ENCODE measurements at regions of chr14 and their contacts with region 1.

Region 1: DNA sequence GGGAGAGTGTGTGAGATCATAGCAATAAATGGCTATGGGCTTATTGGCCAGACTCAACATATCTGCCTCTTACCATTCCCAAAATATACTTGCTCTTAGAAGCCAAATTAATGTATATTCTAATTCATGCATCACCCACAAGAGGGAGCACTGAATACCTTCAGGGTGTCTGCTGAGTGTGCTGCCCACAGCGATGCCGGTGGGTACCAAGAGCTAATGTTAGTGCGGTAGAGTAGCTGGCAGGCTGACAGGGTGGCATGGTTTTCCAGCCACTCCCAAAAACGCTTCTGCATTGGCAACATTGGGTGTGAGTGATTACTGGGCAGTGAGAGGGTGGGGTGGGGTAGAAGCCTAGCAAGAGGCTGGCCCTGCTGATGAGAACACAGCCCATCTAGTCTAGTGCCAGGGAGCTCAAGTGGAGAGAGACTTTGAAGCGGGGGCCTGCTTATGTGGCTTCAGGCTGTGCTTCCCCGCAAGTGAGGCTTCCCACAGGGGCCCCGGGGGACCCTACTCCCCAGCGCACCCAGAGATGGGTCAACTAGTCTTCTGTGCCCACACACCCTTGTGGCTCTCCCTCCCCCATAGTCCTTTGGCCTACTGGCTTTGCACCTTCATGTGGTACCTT is 9.2 kb upstream of the PLEKHD1 start:
- DNase-seq: no peak
- H3K4me3 ChIP-seq: no peak overlapping the region
- H3K27ac ChIP-seq: no peak overlapping the region
- H3K4me1 ChIP-seq: no peaks in the 10 kb centered on the region
- H3K27me3 ChIP-seq: no peaks in the 10 kb centered on the region
- CTCF ChIP-seq: peak; percentile 40 to 57 (median 45); a peak in 3 of 4 replicates
- EP300 ChIP-seq: no peak
- POLR2A ChIP-seq: no peak
- RAD21 ChIP-seq: peak; percentile 35 to 45

Region 2: GRCh38 chr14:69423279-69423678 is 52.0 kb before region 1 on chr14:
- CTCF ChIA-PET with region 1: no interaction called
- POLR2A ChIA-PET with region 1: no interaction called
- DNase-seq: no peak
- H3K4me3 ChIP-seq: no peak overlapping the region
- H3K27ac ChIP-seq: no peak overlapping the region
- H3K4me1 ChIP-seq: no peaks in the 10 kb centered on the region
- H3K27me3 ChIP-seq: no peaks in the 10 kb centered on the region
- CTCF ChIP-seq: no peak
- EP300 ChIP-seq: no peak
- POLR2A ChIP-seq: no peak
- RAD21 ChIP-seq: no peak

Region 3: GRCh38 chr14:69460093-69460701 is 15.1 kb before region 1 on chr14:
- CTCF ChIA-PET with region 1: interaction called, 24 read pairs
- POLR2A ChIA-PET with region 1: no interaction called
- DNase-seq: no peak
- H3K4me3 ChIP-seq: no peak overlapping the region
- H3K27ac ChIP-seq: no peak overlapping the region
- H3K4me1 ChIP-seq: no peaks in the 10 kb centered on the region
- H3K27me3 ChIP-seq: no peaks in the 10 kb centered on the region
- CTCF ChIP-seq: peak in 2 of 3 experiments; percentile 60 to 80; a peak in 3 of 4 replicates
- EP300 ChIP-seq: no peak
- POLR2A ChIP-seq: no peak
- RAD21 ChIP-seq: peak; percentile 70 to 75

Region 4: GRCh38 chr14:69485701-69486100 is 10.4 kb after region 1 on chr14:
- CTCF ChIA-PET with region 1: interaction called, 10 read pairs
- POLR2A ChIA-PET with region 1: interaction called, 3 read pairs
- DNase-seq: no peak
- H3K4me3 ChIP-seq: no peak overlapping the region
- H3K27ac ChIP-seq: no peak overlapping the region
- H3K4me1 ChIP-seq: peaks cover 0 to 5% (median 3%) of the 10 kb centered on the region in 4 experiments; a peak in 1 of 7 replicates
- H3K27me3 ChIP-seq: peaks cover 30 to 52% (median 45%) of the 10 kb centered on the region in 4 experiments
- CTCF ChIP-seq: no peak
- EP300 ChIP-seq: no peak
- POLR2A ChIP-seq: no peak
- RAD21 ChIP-seq: no peak

Region 5: GRCh38 chr14:69493791-69494190 is 18.5 kb after region 1 on chr14:
- CTCF ChIA-PET with region 1: interaction called, 12 read pairs
- POLR2A ChIA-PET with region 1: interaction called, 3 read pairs
- DNase-seq: no peak
- H3K4me3 ChIP-seq: no peak overlapping the region
- H3K27ac ChIP-seq: no peak overlapping the region
- H3K4me1 ChIP-seq: no peaks in the 10 kb centered on the region
- H3K27me3 ChIP-seq: no peaks in the 10 kb centered on the region
- CTCF ChIP-seq: no peak
- EP300 ChIP-seq: no peak
- POLR2A ChIP-seq: no peak
- RAD21 ChIP-seq: no peak

Region 6: GRCh38 chr14:69501423-69501838 is 26.1 kb after region 1 on chr14:
- CTCF ChIA-PET with region 1: interaction called, 14 read pairs
- POLR2A ChIA-PET with region 1: no interaction called
- DNase-seq: no peak
- H3K4me3 ChIP-seq: no peak overlapping the region
- H3K27ac ChIP-seq: no peak overlapping the region
- H3K4me1 ChIP-seq: peaks cover 0 to 5% (median 1%) of the 10 kb centered on the region in 4 experiments; a peak in 2 of 7 replicates
- H3K27me3 ChIP-seq: no peaks in the 10 kb centered on the region; a peak in 1 of 7 replicates
- CTCF ChIP-seq: no peak
- EP300 ChIP-seq: no peak
- POLR2A ChIP-seq: no peak
- RAD21 ChIP-seq: no peak